IMR-90 (cell line): ENCODE measurements at regions of chr2 and their contacts with region 1.

Region 1: GRCh38 chr2:111243295-111243694 is 122.6 kb downstream of the BCL2L11 start:
- DNase-seq: no peak
- ATAC-seq: no peak
- H3K4me3 ChIP-seq: no peak overlapping the region
- H3K27ac ChIP-seq: no peak overlapping the region
- H3K4me1 ChIP-seq: no peaks in the 10 kb centered on the region; the same call in 1 of the 2 replicates
- H3K27me3 ChIP-seq: no peaks in the 10 kb centered on the region
- CTCF ChIP-seq: no peak
- POLR2A ChIP-seq: no peak
- RAD21 ChIP-seq: no peak

Region 2: DNA sequence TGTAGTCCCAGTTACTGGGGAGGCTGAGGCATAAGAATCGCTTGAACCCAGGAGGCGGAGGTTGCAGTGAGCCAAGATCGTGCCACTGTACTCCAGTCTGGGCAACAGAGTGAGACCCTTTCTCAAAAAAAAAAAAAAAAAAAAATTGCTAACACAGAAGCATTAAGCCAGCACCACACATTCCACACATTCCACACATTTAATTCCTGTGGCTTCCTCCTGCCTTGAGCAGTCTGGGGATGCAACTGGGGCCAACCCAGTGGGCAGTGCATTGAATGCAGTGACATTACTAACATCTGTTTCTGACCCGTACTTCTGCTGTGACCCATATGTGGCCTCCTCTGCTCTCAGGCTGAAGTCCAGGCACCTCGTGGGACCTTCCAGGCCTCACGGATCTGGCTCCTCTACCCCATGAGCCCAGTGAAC is 15.6 kb before region 1 on chr2:
- CTCF ChIA-PET with region 1: no interaction called
- POLR2A ChIA-PET with region 1: no interaction called
- dilution Hi-C with region 1: no loop called
- in situ Hi-C with region 1: no loop called
- intact Hi-C with region 1: loop called (anchors 2 kb)
- DNase-seq: peak; percentile 65
- ATAC-seq: peak; percentile 98
- H3K4me3 ChIP-seq: no peak overlapping the region
- H3K27ac ChIP-seq: peak overlapping the region; percentile 4; the same call in 1 of the 2 replicates
- H3K4me1 ChIP-seq: peaks cover 7% of the 10 kb centered on the region
- H3K27me3 ChIP-seq: no peaks in the 10 kb centered on the region
- CTCF ChIP-seq: no peak
- POLR2A ChIP-seq: no peak
- RAD21 ChIP-seq: no peak